A549 (cell line): ENCODE measurements at regions of chr12 and their contacts with region 1.

Region 1: DNA sequence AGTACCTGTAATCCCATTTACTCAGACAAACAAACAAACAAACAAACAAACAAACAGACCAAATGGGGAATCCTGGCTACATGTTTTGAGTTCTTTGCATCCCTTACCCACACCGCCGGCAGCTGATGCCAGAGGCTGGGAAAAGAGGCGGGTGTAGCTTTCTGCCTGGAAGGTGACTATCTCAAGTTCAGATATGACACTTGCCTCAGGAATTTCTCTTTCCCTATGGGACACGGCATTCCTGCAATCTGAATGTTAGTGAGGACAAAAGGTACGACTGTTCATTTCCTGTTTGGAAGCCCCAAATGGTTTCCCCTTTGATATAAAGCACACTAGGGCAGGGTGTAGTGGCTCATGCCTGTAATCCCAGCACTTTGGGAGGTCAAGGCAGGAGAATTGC is 2.9 kb downstream of the MYL2 start:
- DNase-seq: peak; percentile 70 to 82
- ATAC-seq: peak; percentile 80 to 85
- H3K4me3 ChIP-seq: no peak overlapping the region
- H3K27ac ChIP-seq: peak overlapping the region; percentile 69 to 84; a peak in 5 of 6 replicates
- H3K4me1 ChIP-seq: peaks cover 27% of the 10 kb centered on the region
- CTCF ChIP-seq: no peak
- EP300 ChIP-seq: no peak
- POLR2A ChIP-seq: no peak
- RAD21 ChIP-seq: no peak

Region 2: DNA sequence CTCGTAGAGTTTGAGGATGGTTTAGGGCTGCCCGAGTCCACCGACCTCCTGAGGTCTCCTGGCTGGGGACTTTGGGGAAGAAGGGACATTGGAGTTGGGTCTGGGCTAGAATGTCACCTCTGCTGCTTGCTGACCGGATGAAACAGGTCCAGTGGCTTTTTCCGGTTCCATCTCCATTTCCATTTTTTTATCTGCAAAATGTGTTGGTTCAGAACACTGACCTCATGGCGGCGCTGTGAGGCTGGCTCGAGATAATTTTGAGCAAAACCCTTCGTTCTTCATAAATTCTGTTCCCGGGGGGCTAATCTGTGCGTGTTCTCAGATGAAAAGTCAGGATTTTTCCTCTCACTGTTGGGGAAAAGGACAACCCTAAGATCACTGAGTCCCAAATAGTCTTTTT is 14.6 kb after region 1 on chr12:
- CTCF ChIA-PET with region 1: interaction called, 15 read pairs
- POLR2A ChIA-PET with region 1: no interaction called
- DNase-seq: peak in 1 of 2 experiments; percentile 23
- ATAC-seq: no peak
- H3K4me3 ChIP-seq: no peak overlapping the region
- H3K27ac ChIP-seq: peak overlapping the region; percentile 14 to 37; a peak in 2 of 6 replicates
- H3K4me1 ChIP-seq: peaks cover 28% of the 10 kb centered on the region
- CTCF ChIP-seq: peak; percentile 50
- EP300 ChIP-seq: no peak
- POLR2A ChIP-seq: no peak
- RAD21 ChIP-seq: peak; percentile 28 to 44; a peak in 3 of 5 replicates